ENCODE measurements at regions of chr5 and their contacts with region 1.

Region 1: GRCh38 chr5:142699184-142699720 is 13.4 kb upstream of the FGF1 start:
- DNase-seq: peak; percentile 85
- ATAC-seq: peak; percentile 97
- H3K4me3 ChIP-seq: no peak overlapping the region
- H3K27ac ChIP-seq: no peak overlapping the region
- H3K4me1 ChIP-seq: no peaks in the 10 kb centered on the region; the same call in 1 of the 2 replicates
- H3K27me3 ChIP-seq: 0 out of 2 replicates have a peak, but pooled peaks cover 2% of the 10 kb centered on the region
- CTCF ChIP-seq: peak; percentile 96

Region 2: GRCh38 chr5:142151436-142152383 is 547.5 kb before region 1 on chr5:
- CTCF ChIA-PET with region 1: no interaction called
- POLR2A ChIA-PET with region 1: no interaction called
- in situ Hi-C with region 1: no loop called
- intact Hi-C with region 1: loop called (anchors 10 kb)
- DNase-seq: peak; percentile 53
- ATAC-seq: peak; percentile 80
- H3K4me3 ChIP-seq: no peak overlapping the region
- H3K27ac ChIP-seq: no peak overlapping the region
- H3K4me1 ChIP-seq: no peaks in the 10 kb centered on the region; the same call in 1 of the 2 replicates
- H3K27me3 ChIP-seq: no peaks in the 10 kb centered on the region
- CTCF ChIP-seq: peak; percentile 82; the same call in 1 of the 2 replicates

Region 3: DNA sequence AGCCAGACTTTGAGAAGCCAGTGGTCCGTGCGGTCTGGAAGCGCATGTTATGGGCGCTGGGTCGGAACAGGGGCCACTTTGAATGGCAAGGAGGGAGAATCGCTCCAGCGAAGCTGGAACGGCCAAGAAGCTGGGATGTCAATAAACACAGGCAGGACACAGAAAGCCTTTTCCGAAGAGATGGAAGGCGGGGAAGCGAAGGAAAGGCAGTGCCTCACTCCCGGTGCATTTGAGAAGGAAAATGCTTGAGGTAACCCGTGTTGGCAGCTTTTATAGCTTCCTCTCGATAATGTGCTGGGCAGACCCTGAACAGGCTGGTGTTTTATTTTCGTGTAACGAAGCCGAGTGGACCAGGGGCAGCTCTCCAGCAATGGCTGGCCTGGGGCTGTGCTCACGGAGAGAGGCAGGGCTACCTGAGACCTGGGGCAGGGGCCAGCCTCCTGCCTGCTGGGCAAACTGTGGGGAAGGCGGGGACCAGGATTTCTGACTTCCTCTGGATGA is 290.2 kb before region 1 on chr5:
- CTCF ChIA-PET with region 1: no interaction called
- POLR2A ChIA-PET with region 1: no interaction called
- in situ Hi-C with region 1: no loop called
- intact Hi-C with region 1: no loop called
- DNase-seq: no peak
- ATAC-seq: no peak
- H3K4me3 ChIP-seq: no peak overlapping the region
- H3K27ac ChIP-seq: 0 out of 2 replicates have a peak overlapping the region, but pooled peaks have one; percentile 3
- H3K4me1 ChIP-seq: no peaks in the 10 kb centered on the region
- H3K27me3 ChIP-seq: no peaks in the 10 kb centered on the region
- CTCF ChIP-seq: no peak

Region 4: GRCh38 chr5:142655339-142656267 is 43.6 kb before region 1 on chr5:
- CTCF ChIA-PET with region 1: interaction called, 28 read pairs
- POLR2A ChIA-PET with region 1: no interaction called
- in situ Hi-C with region 1: no loop called
- intact Hi-C with region 1: loop called (anchors 1 kb)
- DNase-seq: peak; percentile 45
- ATAC-seq: peak; percentile 95
- H3K4me3 ChIP-seq: no peak overlapping the region
- H3K27ac ChIP-seq: no peak overlapping the region
- H3K4me1 ChIP-seq: no peaks in the 10 kb centered on the region; the same call in 1 of the 2 replicates
- H3K27me3 ChIP-seq: no peaks in the 10 kb centered on the region
- CTCF ChIP-seq: peak; percentile 99

Measured in Panc1 (cell line).